HepG2 (cell line): ENCODE measurements at regions of chr4 and their contacts with region 1.

Region 1: DNA sequence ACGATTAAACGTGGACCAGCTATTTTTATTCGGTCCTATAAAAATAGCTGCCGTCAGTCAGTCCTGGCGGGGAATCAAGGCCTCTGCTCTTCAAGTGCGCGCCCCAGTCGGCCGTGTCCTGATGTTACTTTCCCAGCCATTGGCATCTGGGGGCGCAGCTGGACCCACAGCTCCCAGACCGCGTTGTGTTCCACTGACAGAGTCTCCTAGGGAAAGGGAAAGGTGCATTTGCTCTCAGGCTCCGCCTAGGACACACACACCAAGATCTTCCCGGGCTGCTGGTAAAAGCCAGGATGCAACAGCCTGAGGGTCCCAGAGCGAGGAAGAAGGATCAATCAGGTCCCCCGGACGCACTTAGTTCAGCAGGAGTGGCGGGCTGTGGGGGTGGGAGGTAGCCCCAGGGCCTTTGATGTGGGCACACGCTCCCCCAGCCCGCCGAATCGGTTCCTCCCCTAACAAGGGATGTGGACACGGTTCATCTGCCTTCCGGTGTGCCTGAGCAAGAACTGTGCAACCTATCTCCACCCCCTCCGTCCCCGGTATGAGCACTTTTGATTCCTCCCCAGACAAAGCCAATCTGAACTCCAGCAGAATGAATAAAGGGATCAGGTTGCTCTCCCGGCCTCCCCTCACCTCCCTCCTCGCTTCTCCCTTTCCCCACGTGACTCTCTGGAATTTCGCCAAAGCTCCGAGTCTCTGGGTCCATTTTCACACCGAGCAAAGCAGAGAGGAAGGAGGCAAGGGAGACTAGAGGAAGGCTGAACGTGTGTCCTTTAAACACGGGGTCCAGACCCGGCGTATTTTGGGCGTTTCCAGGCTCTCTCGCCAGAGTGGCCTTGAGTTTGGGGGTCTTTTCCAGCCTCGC is 626 bp upstream of the FRAS1 start:
- DNase-seq: peak; percentile 92
- ATAC-seq: peak; percentile 78
- H3K4me3 ChIP-seq: peak overlapping the region; percentile 67 to 97 (median 85)
- H3K27ac ChIP-seq: peak overlapping the region; percentile 86
- H3K4me1 ChIP-seq: peaks cover 25% of the 10 kb centered on the region
- H3K27me3 ChIP-seq: no peaks in the 10 kb centered on the region; a peak in 1 of 5 replicates
- CTCF ChIP-seq: peak; percentile 75
- EP300 ChIP-seq: peak in 1 of 2 experiments; percentile 3; a peak in 1 of 4 replicates
- POLR2A ChIP-seq: peak; percentile 67 to 80
- RAD21 ChIP-seq: peak; percentile 38; the same call in 1 of the 2 replicates

Region 2: DNA sequence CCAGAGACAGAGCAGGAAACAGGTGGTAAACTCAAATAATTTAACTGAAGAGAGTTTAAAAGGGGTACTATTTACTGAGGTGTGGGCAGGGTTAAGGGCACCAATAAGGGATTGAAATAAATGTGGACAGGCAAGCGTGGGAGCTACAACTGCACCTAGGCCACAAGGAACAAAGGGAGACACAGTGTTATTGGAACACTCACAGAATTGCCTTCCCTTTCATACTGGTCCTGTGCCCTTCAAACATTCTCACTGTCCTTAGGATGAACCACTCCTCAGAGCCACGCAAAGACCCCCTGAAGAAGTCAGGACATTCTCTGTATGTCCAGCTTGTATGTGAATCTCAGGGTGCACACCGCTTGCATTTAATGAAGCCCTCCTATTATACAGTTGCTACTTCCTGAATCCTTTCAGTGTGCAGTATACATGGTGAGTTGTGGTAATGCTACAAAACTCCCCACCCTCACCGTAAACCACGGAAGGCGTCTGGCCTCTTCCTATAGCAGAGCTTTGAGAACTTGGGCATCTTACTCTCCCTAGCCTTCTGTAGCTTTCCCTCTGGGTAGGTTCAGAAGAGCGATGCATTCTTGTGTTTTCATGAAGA is 203.5 kb before region 1 on chr4:
- CTCF ChIA-PET with region 1: no interaction called
- POLR2A ChIA-PET with region 1: no interaction called
- in situ Hi-C with region 1: no loop called
- intact Hi-C with region 1: no loop called
- DNase-seq: no peak
- ATAC-seq: peak; percentile 47
- H3K4me3 ChIP-seq: no peak overlapping the region
- H3K27ac ChIP-seq: no peak overlapping the region
- H3K4me1 ChIP-seq: no peaks in the 10 kb centered on the region
- H3K27me3 ChIP-seq: no peaks in the 10 kb centered on the region
- CTCF ChIP-seq: no peak
- EP300 ChIP-seq: no peak
- POLR2A ChIP-seq: no peak
- RAD21 ChIP-seq: no peak

Region 3: DNA sequence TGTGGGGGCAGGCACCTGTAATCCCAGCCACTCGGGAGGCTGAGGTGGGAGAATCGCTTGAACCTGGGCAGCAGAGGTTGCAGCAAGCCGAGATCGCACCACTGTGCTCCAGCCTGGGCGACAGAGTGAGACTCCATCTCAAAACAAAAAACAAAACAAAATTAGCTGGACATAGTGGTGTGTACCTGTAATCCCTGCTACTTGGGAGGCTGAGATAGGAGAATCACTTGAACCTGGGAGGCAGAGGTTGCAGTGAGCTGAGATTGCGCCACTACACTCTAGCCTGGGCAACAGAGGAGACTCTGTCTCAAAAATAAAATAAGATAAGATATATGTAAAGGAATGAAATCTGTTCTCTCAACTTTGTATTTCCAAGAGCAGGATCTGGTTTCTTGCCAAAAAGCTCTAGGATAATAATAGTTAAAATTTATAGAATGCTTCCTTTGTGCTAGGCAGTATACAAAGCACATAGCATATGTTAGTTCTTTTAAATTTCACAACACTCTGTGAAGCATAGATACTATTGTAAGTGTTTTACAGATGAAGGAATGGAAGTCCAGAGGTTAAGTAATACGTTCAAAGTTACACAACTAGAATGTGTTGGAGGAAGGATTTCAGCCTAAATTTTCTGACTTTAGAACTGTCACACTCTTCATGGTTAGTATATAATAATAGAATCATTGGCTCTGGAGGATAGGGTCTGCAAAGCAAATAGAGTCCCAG is 183.6 kb before region 1 on chr4:
- CTCF ChIA-PET with region 1: no interaction called
- POLR2A ChIA-PET with region 1: no interaction called
- in situ Hi-C with region 1: no loop called
- intact Hi-C with region 1: loop called (anchors 2 kb)
- DNase-seq: peak; percentile 91
- ATAC-seq: peak; percentile 97
- H3K4me3 ChIP-seq: no peak overlapping the region; a peak in 1 of 6 replicates
- H3K27ac ChIP-seq: peak overlapping the region; percentile 72
- H3K4me1 ChIP-seq: peaks cover 61% of the 10 kb centered on the region
- H3K27me3 ChIP-seq: no peaks in the 10 kb centered on the region
- CTCF ChIP-seq: no peak
- EP300 ChIP-seq: peak; percentile 64 to 68; a peak in 2 of 4 replicates
- POLR2A ChIP-seq: no peak
- RAD21 ChIP-seq: no peak

Region 4: DNA sequence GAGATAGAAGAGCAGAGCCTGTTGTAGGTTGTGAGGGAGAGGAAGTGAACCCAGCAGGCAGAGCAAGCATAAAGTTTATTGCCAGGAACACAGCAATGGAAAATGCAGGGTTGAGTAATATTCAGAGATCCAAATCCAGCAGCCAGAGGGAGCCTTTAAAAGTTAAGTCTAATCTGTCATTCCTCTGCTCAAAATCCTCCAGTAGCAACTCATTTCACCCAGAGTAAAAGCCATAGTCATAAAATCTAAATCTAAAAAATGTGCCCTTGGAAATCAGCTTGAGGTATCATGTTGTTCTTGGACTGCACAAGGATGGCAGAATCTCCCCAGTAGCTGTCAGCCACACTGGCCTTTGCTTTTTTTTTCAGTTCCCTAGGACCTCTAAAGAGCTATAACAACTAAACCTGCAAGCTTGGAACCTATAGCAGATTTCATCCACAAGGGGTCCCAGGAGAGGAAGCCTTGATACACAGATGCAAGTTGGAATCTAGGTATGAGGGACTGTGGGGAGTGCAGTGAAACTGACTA is 62.2 kb before region 1 on chr4:
- CTCF ChIA-PET with region 1: interaction called, 15 read pairs
- POLR2A ChIA-PET with region 1: interaction called, 19 read pairs
- in situ Hi-C with region 1: loop called (anchors 5 kb)
- intact Hi-C with region 1: loop called (anchors 1 kb)
- DNase-seq: peak; percentile 84
- ATAC-seq: peak; percentile 95
- H3K4me3 ChIP-seq: peak overlapping the region in 1 of 3 experiments; percentile 13; a peak in 1 of 6 replicates
- H3K27ac ChIP-seq: no peak overlapping the region
- H3K4me1 ChIP-seq: peaks cover 60% of the 10 kb centered on the region
- H3K27me3 ChIP-seq: no peaks in the 10 kb centered on the region
- CTCF ChIP-seq: peak; percentile 83
- EP300 ChIP-seq: no peak
- POLR2A ChIP-seq: no peak
- RAD21 ChIP-seq: peak; percentile 54; the same call in 1 of the 2 replicates

Region 5: DNA sequence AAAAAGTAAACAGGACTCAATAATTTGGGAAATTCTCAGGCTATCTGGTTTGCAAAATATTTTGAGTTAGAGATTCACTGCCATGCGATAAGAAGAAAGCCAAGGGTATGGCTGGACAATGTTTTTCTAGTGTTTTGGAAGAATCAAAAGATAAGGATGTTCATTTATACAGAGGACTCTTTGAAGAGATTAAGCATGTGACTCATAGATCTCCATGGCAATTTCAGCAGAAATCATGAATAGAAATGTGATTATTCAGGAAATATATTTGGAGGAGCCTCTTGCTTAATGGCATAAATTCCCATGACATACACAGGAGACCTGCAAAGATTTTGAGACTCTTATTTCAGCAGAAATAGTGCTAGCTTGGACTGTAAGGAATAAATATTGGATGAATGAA is 16.1 kb before region 1 on chr4:
- CTCF ChIA-PET with region 1: no interaction called
- POLR2A ChIA-PET with region 1: interaction called, 14 read pairs
- in situ Hi-C with region 1: no loop called
- intact Hi-C with region 1: no loop called
- DNase-seq: no peak
- ATAC-seq: no peak
- H3K4me3 ChIP-seq: no peak overlapping the region
- H3K27ac ChIP-seq: no peak overlapping the region
- H3K4me1 ChIP-seq: no peaks in the 10 kb centered on the region
- H3K27me3 ChIP-seq: peaks cover 2 to 11% of the 10 kb centered on the region in 2 experiments; a peak in 2 of 5 replicates
- CTCF ChIP-seq: no peak
- EP300 ChIP-seq: no peak
- POLR2A ChIP-seq: no peak
- RAD21 ChIP-seq: no peak

Region 6: GRCh38 chr4:78166637-78167036 is 110.1 kb after region 1 on chr4:
- CTCF ChIA-PET with region 1: no interaction called
- POLR2A ChIA-PET with region 1: interaction called, 7 read pairs
- in situ Hi-C with region 1: no loop called
- intact Hi-C with region 1: loop called (anchors 5 kb)
- DNase-seq: no peak
- ATAC-seq: no peak
- H3K4me3 ChIP-seq: no peak overlapping the region
- H3K27ac ChIP-seq: peak overlapping the region; percentile 82
- H3K4me1 ChIP-seq: peaks cover 69% of the 10 kb centered on the region
- H3K27me3 ChIP-seq: no peaks in the 10 kb centered on the region
- CTCF ChIP-seq: no peak
- EP300 ChIP-seq: no peak
- POLR2A ChIP-seq: no peak
- RAD21 ChIP-seq: no peak

Region 7: GRCh38 chr4:78213209-78213608 is 156.7 kb after region 1 on chr4:
- CTCF ChIA-PET with region 1: no interaction called
- POLR2A ChIA-PET with region 1: no interaction called
- in situ Hi-C with region 1: no loop called
- intact Hi-C with region 1: no loop called
- DNase-seq: no peak
- ATAC-seq: no peak
- H3K4me3 ChIP-seq: no peak overlapping the region
- H3K27ac ChIP-seq: no peak overlapping the region
- H3K4me1 ChIP-seq: peaks cover 31% of the 10 kb centered on the region
- H3K27me3 ChIP-seq: no peaks in the 10 kb centered on the region
- CTCF ChIP-seq: no peak
- EP300 ChIP-seq: no peak
- POLR2A ChIP-seq: no peak
- RAD21 ChIP-seq: no peak

Region 8: GRCh38 chr4:78293821-78294301 is 237.4 kb after region 1 on chr4:
- CTCF ChIA-PET with region 1: no interaction called
- POLR2A ChIA-PET with region 1: no interaction called
- in situ Hi-C with region 1: no loop called
- intact Hi-C with region 1: loop called (anchors 10 kb)
- DNase-seq: no peak
- ATAC-seq: peak; percentile 54
- H3K4me3 ChIP-seq: no peak overlapping the region
- H3K27ac ChIP-seq: no peak overlapping the region
- H3K4me1 ChIP-seq: peaks cover 13% of the 10 kb centered on the region
- H3K27me3 ChIP-seq: no peaks in the 10 kb centered on the region
- CTCF ChIP-seq: no peak; the same call in 1 of the 2 replicates
- EP300 ChIP-seq: no peak
- POLR2A ChIP-seq: no peak
- RAD21 ChIP-seq: no peak

Region 9: DNA sequence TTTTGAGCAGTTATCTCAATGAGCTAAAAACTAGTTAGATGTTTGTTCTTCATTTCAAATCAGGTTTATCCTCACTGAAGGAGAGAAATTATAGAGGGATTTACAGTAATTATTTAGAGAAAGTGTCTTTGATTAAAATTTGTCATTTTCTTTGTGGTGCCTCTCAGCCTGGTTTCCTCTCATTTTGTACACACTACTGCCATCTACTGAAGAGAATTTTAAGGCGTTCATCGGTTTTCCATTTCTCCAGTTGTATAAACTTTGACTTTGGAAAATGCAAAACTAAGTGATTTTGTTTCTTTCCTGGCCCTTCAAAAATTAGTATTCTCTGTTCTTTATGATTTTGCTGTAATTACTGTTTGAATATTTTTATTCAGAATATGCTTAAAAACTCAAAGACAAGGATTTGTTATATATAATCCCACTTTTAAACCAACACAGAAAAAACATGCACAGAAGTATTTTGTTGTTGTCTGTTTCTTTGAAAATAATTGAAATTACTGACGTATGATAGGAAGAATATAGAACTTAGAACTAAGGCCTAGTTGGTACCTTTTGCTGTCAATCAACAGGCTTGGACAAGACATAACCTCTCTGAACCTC is 460.7 kb after region 1 on chr4:
- CTCF ChIA-PET with region 1: interaction called, 4 read pairs
- POLR2A ChIA-PET with region 1: no interaction called
- in situ Hi-C with region 1: no loop called
- intact Hi-C with region 1: loop called (anchors 2 kb)
- DNase-seq: peak; percentile 11
- ATAC-seq: no peak
- H3K4me3 ChIP-seq: no peak overlapping the region
- H3K27ac ChIP-seq: no peak overlapping the region
- H3K4me1 ChIP-seq: peaks cover 23% of the 10 kb centered on the region
- H3K27me3 ChIP-seq: no peaks in the 10 kb centered on the region
- CTCF ChIP-seq: peak; percentile 65
- EP300 ChIP-seq: no peak
- POLR2A ChIP-seq: no peak
- RAD21 ChIP-seq: peak; percentile 34; the same call in 1 of the 2 replicates